Caco-2 (cell line): ENCODE measurements at regions of chr7 and their contacts with region 1.

Region 1: GRCh38 chr7:100803398-100804233 is 23.7 kb downstream of the EPHB4 start:
- DNase-seq: peak in 1 of 2 experiments; percentile 62
- H3K4me3 ChIP-seq: no peak overlapping the region
- H3K4me3 Mint-ChIP-seq: no peak overlapping the region
- H3K27ac Mint-ChIP-seq: peak overlapping the region; percentile 70
- H3K4me1 ChIP-seq: peaks cover 47% of the 10 kb centered on the region
- H3K4me1 Mint-ChIP-seq: peaks cover 38% of the 10 kb centered on the region
- H3K27me3 ChIP-seq: no peaks in the 10 kb centered on the region
- H3K27me3 Mint-ChIP-seq: no peaks in the 10 kb centered on the region
- CTCF ChIP-seq: no peak

Region 2: GRCh38 chr7:100819551-100819950 is 15.9 kb after region 1 on chr7:
- CTCF ChIA-PET with region 1: interaction called, 4 read pairs
- POLR2A ChIA-PET with region 1: interaction called, 3 read pairs
- intact Hi-C with region 1: loop called (anchors 1 kb)
- DNase-seq: no peak
- H3K4me3 ChIP-seq: no peak overlapping the region
- H3K4me3 Mint-ChIP-seq: no peak overlapping the region
- H3K27ac Mint-ChIP-seq: no peak overlapping the region
- H3K4me1 ChIP-seq: no peaks in the 10 kb centered on the region; the same call in 1 of the 2 replicates
- H3K4me1 Mint-ChIP-seq: no peaks in the 10 kb centered on the region
- H3K27me3 ChIP-seq: no peaks in the 10 kb centered on the region
- H3K27me3 Mint-ChIP-seq: no peaks in the 10 kb centered on the region
- CTCF ChIP-seq: no peak

Region 3: DNA sequence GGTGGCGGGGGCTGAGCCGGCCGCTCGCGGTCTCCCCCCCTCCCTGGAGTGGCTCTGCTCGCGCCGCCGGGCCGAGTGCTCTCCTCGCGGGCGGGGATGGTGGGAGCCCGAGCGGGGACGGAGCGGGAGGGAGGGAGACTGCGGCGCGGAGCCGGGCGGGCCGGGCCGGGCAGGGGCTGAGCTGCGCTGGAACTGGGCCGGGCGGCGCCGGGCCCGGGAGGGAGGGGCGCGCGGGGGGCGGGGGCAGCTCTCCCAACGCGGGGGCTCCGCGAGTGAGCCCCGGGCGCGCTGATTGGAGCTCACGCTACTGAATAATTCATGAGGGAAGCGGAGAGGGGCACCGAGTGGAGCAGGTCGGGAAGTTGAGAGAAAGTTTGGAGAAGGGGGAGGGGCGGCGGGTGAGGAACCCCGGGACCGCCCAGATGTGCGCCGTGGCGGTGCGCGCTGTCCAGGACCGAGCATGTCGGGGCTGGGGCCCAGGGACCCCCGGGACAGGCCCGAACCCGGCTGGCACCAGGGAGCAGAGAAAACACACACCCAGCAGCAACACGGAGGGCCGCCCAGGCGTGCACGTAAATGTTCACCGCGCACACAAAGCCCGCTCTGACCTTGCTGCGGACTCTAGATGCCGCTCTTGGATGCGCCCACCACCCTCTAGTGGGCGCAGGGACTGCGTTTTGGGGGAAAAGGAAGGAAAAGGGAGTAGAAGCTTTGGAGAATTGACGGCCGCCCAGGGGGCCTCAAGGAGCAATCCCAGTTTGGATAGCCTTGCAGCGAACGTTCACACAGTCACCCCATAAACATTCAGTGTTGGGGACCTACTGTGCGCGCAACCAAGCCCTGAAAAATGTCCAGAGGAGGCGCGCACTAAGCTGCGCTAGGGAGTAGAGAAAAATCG is 24.0 kb after region 1 on chr7 and contains the start of gene EPHB4:
- CTCF ChIA-PET with region 1: interaction called, 15 read pairs
- POLR2A ChIA-PET with region 1: interaction called, 13 read pairs
- intact Hi-C with region 1: loop called (anchors 1 kb)
- DNase-seq: peak; percentile 93 to 95
- H3K4me3 ChIP-seq: peak within 1 kb of the TSS; percentile 71
- H3K4me3 Mint-ChIP-seq: peak within 1 kb of the TSS; percentile 89
- H3K27ac Mint-ChIP-seq: peak within 1 kb of the TSS; percentile 88
- H3K4me1 ChIP-seq: peaks cover 29% of the 10 kb centered on the region
- H3K4me1 Mint-ChIP-seq: peaks cover 27% of the 10 kb centered on the region
- H3K27me3 ChIP-seq: no peaks in the 10 kb centered on the region
- H3K27me3 Mint-ChIP-seq: no peaks in the 10 kb centered on the region
- CTCF ChIP-seq: peak; percentile 44 to 92
- total RNA-seq, gene EPHB4: 112 and 117 TPM in 2 replicates

Region 4: GRCh38 chr7:100874577-100875355 is 71.2 kb after region 1 on chr7 and contains the start of gene SRRT:
- CTCF ChIA-PET with region 1: interaction called, 12 read pairs
- POLR2A ChIA-PET with region 1: interaction called, 6 read pairs
- intact Hi-C with region 1: no loop called
- DNase-seq: peak; percentile 98 to 99
- H3K4me3 ChIP-seq: peak within 1 kb of the TSS; percentile 81
- H3K4me3 Mint-ChIP-seq: peak within 1 kb of the TSS; percentile 85
- H3K27ac Mint-ChIP-seq: peak within 1 kb of the TSS; percentile 98
- H3K4me1 ChIP-seq: peaks cover 10% of the 10 kb centered on the region; the same call in 1 of the 2 replicates
- H3K4me1 Mint-ChIP-seq: peaks cover 14% of the 10 kb centered on the region
- H3K27me3 ChIP-seq: no peaks in the 10 kb centered on the region
- H3K27me3 Mint-ChIP-seq: no peaks in the 10 kb centered on the region
- CTCF ChIP-seq: peak; percentile 33 to 48
- total RNA-seq, gene SRRT: 211 and 243 TPM in 2 replicates